Thyroid gland (tissue), 4 donors: ENCODE measurements at regions of chr12 and their contacts with region 1.

Region 1: DNA sequence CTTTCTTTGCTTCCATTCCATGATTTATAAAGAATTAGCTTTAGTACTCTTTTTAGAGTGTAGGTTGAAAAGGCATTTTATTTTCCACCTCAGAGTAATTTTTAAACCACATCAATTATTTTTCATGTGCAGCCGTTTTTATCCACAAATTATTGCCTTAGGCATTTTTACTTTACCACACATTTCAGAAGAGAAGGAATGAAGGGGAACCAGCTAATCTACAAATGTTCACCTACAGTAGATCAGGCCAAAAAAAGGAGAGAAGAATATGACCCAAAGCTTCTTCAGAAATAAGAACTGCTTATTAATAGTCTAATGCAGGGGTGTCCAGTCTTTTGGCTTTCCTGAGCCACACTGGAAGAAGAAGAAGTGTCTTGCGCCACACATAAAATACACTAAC is 19.8 kb upstream of the NTN4 start:
- DNase-seq: no peak
- H3K4me3 ChIP-seq: no peak overlapping the region
- H3K27ac ChIP-seq: no peak overlapping the region
- H3K4me1 ChIP-seq: no peaks in the 10 kb centered on the region
- H3K27me3 ChIP-seq: no peaks in the 10 kb centered on the region
- CTCF ChIP-seq: no peak
- POLR2A ChIP-seq: no peak

Region 2: DNA sequence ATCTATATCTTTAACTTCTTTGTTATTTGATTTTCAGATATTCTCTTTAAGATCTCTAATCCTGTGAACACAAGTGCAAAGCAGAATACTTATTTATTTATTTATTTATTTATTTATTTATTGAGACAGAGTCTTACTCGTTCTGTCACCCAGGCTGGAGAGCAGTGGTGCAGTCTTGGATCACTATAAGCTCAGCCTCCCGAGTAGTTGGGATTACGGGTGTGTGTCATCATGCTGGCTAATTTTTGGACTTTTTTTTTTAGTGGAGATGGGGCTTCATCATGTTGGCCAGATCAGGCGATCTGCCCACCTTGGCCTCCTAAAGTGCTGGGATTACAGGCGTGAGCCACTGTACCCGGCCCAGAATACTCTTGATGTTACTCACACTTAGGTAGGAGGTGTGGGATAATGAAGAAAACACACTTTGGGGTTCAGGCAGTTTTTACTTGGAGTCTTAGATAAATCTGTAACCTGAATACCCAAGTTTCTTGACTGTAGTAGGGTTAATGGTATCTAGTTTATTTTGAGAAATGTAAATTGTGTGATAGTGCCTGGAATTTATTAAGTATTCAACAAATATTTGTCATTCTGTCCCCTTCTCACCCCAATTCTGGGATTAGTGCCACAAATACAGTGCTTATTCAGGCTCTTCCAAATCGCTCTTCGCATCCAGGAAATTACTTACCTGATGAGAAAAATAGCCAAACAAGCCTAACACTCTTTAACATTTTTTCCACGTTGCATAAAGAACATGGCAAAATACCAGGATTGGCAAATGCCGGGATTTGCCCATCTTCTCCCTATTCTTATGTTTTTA is 303.5 kb before region 1 on chr12:
- intact Hi-C with region 1: no loop called
- DNase-seq: no peak
- H3K4me3 ChIP-seq: no peak overlapping the region
- H3K27ac ChIP-seq: no peak overlapping the region
- H3K4me1 ChIP-seq: no peaks in the 10 kb centered on the region
- H3K27me3 ChIP-seq: no peaks in the 10 kb centered on the region
- CTCF ChIP-seq: no peak
- POLR2A ChIP-seq: no peak

Region 3: GRCh38 chr12:95626854-95627253 is 183.6 kb before region 1 on chr12:
- intact Hi-C with region 1: loop called (anchors 5 kb)
- DNase-seq: no peak
- H3K4me3 ChIP-seq: no peak overlapping the region
- H3K27ac ChIP-seq: no peak overlapping the region
- H3K4me1 ChIP-seq: peaks cover 0 to 5% of the 10 kb centered on the region in 2 donors
- H3K27me3 ChIP-seq: no peaks in the 10 kb centered on the region
- CTCF ChIP-seq: no peak
- POLR2A ChIP-seq: no peak